ENCODE measurements at regions of chr1 and their contacts with region 1.

Region 1: DNA sequence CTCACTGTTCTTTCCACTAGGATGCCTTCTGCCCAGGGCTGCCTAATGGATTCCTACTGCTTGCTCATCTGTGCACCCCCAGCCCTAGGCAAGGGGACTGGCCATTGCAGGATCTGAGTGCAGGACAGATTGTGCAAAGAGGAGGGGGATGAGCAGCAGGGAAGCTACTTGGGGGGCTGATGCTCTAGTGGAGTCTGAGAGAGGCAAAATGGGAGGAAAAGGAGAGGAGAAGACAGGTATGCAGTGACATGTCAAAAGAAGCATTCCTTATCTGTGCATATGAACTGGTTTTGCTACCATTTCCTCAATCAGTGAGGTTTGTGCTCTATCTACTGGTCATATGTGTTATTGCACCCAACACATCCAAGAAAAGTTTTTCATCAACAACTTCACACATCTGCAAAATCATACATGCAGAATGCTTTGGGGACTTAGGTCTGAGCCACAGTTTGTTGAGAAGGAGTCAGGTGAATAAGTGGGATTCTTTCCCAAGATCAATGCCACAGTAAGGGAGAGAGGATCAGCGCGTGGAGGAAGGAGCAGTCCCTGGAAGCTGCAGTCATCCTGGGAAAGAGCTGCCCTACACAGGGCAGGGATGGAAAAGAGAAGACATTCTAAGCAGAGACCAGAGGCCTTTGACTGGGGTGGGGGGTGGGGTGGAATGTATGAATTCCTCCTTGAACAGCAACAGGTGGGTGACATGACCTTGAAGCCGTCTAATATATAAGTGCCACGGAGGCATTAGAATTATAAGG is 14.4 kb downstream of the SLC5A9 start:
- DNase-seq: peak in 4 of 5 donors; percentile 17 to 29 (median 22)
- H3K4me3 ChIP-seq: no peak overlapping the region
- H3K4me3 Mint-ChIP-seq: no peak overlapping the region
- H3K27ac ChIP-seq: no peak overlapping the region
- H3K27ac Mint-ChIP-seq: no peak overlapping the region
- H3K4me1 ChIP-seq: no peaks in the 10 kb centered on the region
- H3K4me1 Mint-ChIP-seq: no peaks in the 10 kb centered on the region
- H3K27me3 ChIP-seq: no peaks in the 10 kb centered on the region
- H3K27me3 Mint-ChIP-seq: peaks cover 0 to 2% of the 10 kb centered on the region in 2 donors

Region 2: DNA sequence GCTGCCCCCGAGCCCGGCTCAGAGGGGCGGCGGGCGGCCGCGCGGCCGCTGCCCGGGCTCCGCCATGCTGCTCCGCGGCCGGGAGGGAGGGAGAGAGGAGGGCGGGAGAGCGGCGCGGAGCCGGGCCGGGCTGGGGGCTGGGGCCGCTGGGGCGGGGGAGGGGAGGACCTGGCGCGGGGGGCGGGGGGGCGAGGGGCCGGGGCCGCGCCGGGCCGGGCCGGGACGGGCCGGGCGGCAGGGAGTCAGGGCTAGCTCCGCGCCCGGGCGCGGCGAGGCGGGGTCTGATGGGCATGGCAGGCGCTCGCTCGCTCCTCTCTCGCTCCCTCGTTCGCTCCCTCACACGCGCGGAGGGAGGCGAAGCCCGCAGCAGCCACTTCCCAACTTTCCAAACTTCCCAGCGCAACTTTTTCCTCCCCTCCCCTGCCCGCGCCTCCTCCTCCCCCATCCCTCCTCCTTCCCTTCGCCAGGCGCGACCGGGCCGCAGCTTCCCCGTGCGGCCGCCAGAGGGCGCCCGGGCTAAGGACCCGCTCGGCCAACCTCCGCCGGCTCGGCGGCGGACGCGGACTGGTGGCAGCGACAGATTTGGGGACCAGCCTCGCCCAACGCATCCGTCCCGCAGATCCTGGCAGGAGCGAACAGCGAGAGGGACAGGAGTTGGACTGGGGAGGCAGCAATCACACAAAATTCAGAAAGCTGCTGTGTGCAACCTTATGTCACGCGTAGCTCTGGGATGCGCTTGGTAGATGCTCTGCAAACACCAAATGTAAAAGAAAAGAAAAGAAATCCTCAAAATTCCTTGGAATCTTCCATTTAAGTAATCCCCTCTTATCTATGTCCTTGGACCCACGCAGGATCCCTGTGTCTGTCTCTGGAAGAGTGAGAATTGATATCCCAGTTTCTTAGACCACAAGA is 239.3 kb before region 1 on chr1 and contains the start of gene TRABD2B:
- CTCF ChIA-PET with region 1: interaction called, 8 read pairs
- POLR2A ChIA-PET with region 1: no interaction called
- intact Hi-C with region 1: loop called (anchors 2 kb)
- DNase-seq: peak in 4 of 5 donors; percentile 33 to 59 (median 49)
- H3K4me3 ChIP-seq: no peak within 1 kb of the TSS
- H3K4me3 Mint-ChIP-seq: peak within 1 kb of the TSS; percentile 53 to 83 (median 68)
- H3K27ac ChIP-seq: no peak within 1 kb of the TSS
- H3K27ac Mint-ChIP-seq: peak within 1 kb of the TSS in 1 of 7 donors; percentile 76
- H3K4me1 ChIP-seq: no peaks in the 10 kb centered on the region
- H3K4me1 Mint-ChIP-seq: peaks cover 0 to 6% (median 5%) of the 10 kb centered on the region in 4 donors
- H3K27me3 ChIP-seq: peaks cover 5% of the 10 kb centered on the region
- H3K27me3 Mint-ChIP-seq: peaks cover 40 to 43% of the 10 kb centered on the region in 2 donors
- total RNA-seq, gene TRABD2B: not detected

Region 3: DNA sequence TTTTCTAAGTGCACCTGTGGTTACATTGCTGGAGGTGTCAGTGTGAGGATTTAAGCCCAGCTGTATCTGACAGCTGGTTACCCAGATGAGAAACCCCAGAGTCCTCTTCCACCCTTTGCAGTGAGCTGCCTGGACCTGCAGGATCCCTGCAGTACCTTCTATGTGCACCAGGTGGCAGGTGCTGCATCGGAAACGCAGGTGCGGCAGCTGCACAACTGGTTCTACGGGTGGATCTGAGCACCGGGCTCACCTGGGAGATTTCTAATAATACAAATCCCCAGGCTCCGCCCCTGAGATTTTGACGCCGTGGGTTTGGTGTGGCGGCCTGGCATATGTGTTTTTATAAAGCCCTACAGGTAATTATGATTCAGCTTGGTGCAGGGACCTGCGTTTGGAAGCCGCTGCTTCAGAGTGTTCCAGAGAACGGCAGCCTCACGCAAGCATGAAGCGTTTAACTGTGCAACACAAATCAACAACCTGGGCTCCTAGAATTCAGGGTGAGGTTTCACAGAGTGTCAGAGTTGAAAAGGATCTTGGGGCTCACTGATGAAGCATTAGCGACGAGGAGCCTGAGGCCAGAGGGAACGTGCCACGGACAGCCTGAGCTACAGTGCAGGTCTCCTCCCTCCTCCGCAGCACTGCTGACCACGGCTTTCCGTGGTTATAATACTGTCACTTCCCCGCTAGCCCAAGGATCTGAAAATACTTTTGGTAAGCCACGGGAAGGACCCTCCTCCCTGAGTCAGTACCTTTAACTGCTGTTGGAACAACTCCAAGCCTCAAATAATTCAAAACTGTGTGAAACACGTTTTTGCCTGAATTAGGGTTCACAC is 143.0 kb before region 1 on chr1:
- CTCF ChIA-PET with region 1: interaction called, 32 read pairs
- POLR2A ChIA-PET with region 1: no interaction called
- intact Hi-C with region 1: loop called (anchors 1 kb)
- DNase-seq: peak; percentile 50 to 61 (median 57)
- H3K4me3 ChIP-seq: no peak overlapping the region
- H3K4me3 Mint-ChIP-seq: peak overlapping the region; percentile 53 to 80 (median 70)
- H3K27ac ChIP-seq: no peak overlapping the region
- H3K27ac Mint-ChIP-seq: no peak overlapping the region
- H3K4me1 ChIP-seq: peaks cover 6% of the 10 kb centered on the region
- H3K4me1 Mint-ChIP-seq: peaks cover 2 to 9% (median 7%) of the 10 kb centered on the region in 4 donors
- H3K27me3 ChIP-seq: peaks cover 2% of the 10 kb centered on the region
- H3K27me3 Mint-ChIP-seq: peaks cover 34% of the 10 kb centered on the region in 2 donors

Region 4: DNA sequence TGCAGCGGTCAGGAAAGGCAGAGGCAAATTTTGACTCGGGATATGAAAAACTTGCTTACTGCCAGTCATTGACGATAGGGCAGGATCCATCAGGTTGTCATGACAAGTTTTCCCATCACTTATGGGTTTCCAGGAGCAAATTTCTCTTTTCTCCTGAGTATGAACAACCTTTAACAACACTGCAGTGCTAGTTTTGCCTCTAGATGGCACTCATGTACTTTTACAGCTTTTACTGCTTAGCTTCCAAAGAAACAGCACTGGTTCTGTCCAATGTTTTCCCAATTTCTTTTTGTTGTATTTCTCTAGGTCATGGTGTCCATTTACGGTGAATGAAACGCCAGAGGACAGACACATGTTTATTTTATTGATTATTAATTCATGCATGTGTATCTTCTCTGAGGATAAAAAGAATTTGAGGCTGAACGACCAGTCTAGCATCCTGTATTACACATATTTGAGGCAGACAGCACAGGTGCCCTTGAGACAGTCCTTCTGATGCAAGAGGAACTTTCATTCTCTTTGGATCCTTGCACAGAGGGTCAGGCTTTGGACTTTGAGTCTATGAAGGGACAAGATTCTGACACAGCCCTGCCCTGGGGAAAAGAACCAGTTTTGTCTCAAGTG is 127.4 kb before region 1 on chr1:
- CTCF ChIA-PET with region 1: interaction called, 4 read pairs
- POLR2A ChIA-PET with region 1: no interaction called
- intact Hi-C with region 1: loop called (anchors 5 kb)
- DNase-seq: peak in 2 of 5 donors; percentile 5 to 10
- H3K4me3 ChIP-seq: no peak overlapping the region
- H3K4me3 Mint-ChIP-seq: no peak overlapping the region
- H3K27ac ChIP-seq: no peak overlapping the region
- H3K27ac Mint-ChIP-seq: no peak overlapping the region
- H3K4me1 ChIP-seq: no peaks in the 10 kb centered on the region
- H3K4me1 Mint-ChIP-seq: no peaks in the 10 kb centered on the region
- H3K27me3 ChIP-seq: no peaks in the 10 kb centered on the region
- H3K27me3 Mint-ChIP-seq: peaks cover 1 to 8% of the 10 kb centered on the region in 2 donors

Measured in CD4-positive, alpha-beta memory T cell (primary cell).